ENCODE measurements at regions of chr11 and their contacts with region 1.

Region 1: GRCh38 chr11:73376160-73376802 is at the start of gene RELT:
- DNase-seq: peak; percentile 91
- H3K4me3 Mint-ChIP-seq: peak within 1 kb of the TSS; percentile 92
- H3K27ac Mint-ChIP-seq: peak within 1 kb of the TSS; percentile 91
- H3K4me1 Mint-ChIP-seq: peaks cover 45% of the 10 kb centered on the region
- H3K27me3 Mint-ChIP-seq: no peaks in the 10 kb centered on the region
- total RNA-seq, gene RELT: 17.9 to 18.5 TPM

Region 2: DNA sequence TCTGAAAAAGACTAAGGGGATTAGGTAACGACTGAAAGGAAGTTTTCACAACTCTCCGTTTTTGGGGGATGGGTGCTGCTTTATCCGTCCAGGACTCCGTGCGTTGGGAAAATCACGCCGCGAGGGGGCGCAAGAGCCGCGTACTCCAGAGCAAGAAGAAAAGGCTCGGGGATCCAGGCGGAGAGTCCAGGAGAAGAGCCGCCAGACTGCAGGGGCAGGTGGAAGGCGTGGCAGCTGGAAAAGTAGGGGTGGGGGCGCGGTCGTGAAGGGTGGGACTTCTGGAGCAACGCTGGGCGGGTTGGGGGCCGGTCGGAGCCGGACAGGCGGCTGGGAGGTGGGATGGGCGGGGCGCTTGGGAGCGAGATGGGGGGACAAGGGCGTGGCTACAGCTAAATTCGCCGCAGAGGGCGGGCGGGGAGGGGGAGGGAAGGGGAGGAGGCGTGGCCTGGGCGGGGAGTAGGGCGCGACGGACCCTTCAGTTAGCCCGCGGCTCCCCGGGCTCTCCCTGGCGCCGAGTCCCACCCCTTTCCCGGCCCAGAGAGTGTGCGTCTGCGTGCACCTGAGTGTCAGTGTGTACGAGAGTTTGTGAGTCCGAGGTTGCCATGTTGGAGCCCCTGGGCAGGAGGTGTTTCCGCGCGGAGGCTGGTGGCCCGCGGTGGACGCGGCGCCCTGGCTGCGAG is 68.8 kb before region 1 on chr11:
- CTCF ChIA-PET with region 1: no interaction called
- intact Hi-C with region 1: loop called (anchors 1 kb)
- DNase-seq: peak; percentile 95
- H3K4me3 Mint-ChIP-seq: peak overlapping the region; percentile 76
- H3K27ac Mint-ChIP-seq: no peak overlapping the region
- H3K4me1 Mint-ChIP-seq: peaks cover 6% of the 10 kb centered on the region
- H3K27me3 Mint-ChIP-seq: peaks cover 15% of the 10 kb centered on the region

Region 3: GRCh38 chr11:73360336-73361013 is 15.8 kb before region 1 on chr11:
- CTCF ChIA-PET with region 1: interaction called, 13 read pairs
- intact Hi-C with region 1: no loop called
- DNase-seq: peak; percentile 46
- H3K4me3 Mint-ChIP-seq: no peak overlapping the region
- H3K27ac Mint-ChIP-seq: no peak overlapping the region
- H3K4me1 Mint-ChIP-seq: no peaks in the 10 kb centered on the region
- H3K27me3 Mint-ChIP-seq: no peaks in the 10 kb centered on the region

Region 4: DNA sequence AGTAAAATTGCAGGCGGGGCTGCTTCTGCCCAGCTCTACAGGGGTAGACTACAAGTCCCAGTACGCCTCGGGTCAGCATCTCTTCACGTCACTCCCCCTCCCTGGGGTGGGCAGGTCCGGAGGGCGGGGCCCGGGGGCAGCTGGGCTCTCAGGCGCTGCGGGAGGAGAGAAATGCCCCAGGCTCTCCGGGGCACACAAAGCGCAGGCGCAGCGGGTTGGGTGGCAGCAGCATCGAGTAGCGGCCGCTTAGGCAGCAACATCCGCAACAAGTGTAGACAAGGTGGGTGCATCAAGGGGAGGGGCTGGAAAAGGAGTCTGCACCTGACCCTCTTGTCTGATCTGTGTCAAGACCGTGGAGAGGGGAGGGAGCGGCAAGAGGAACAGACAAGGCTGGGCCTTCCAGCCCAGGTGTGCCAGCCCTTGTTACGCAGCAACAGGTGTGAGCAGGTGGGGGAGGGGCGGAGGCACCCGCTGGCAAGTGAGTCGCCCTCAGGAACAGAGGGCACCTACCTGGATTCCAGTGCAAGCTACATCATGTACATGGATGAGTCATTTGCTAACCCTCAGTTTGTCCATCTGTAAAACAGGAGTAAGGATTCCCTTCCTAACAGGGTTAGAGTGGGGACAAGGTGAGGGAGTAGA is 271.3 kb after region 1 on chr11:
- CTCF ChIA-PET with region 1: interaction called, 4 read pairs
- intact Hi-C with region 1: loop called (anchors 1 kb)
- DNase-seq: peak; percentile 96
- H3K4me3 Mint-ChIP-seq: peak overlapping the region; percentile 80
- H3K27ac Mint-ChIP-seq: peak overlapping the region; percentile 63
- H3K4me1 Mint-ChIP-seq: peaks cover 18% of the 10 kb centered on the region
- H3K27me3 Mint-ChIP-seq: no peaks in the 10 kb centered on the region

Region 5: GRCh38 chr11:73760679-73761402 is 384.6 kb after region 1 on chr11 and contains the start of gene RAB6A:
- CTCF ChIA-PET with region 1: no interaction called
- intact Hi-C with region 1: loop called (anchors 10 kb)
- DNase-seq: peak; percentile 100
- H3K4me3 Mint-ChIP-seq: peak within 1 kb of the TSS; percentile 88
- H3K27ac Mint-ChIP-seq: peak within 1 kb of the TSS; percentile 90
- H3K4me1 Mint-ChIP-seq: peaks cover 34% of the 10 kb centered on the region
- H3K27me3 Mint-ChIP-seq: no peaks in the 10 kb centered on the region
- total RNA-seq, gene RAB6A: 36.7 to 41.2 TPM

Region 6: GRCh38 chr11:73876424-73877300 is 500.4 kb after region 1 on chr11 and contains the starts of genes COA4 and PAAF1:
- CTCF ChIA-PET with region 1: no interaction called
- intact Hi-C with region 1: loop called (anchors 5 kb)
- DNase-seq: peak; percentile 97
- H3K4me3 Mint-ChIP-seq: peak within 1 kb of the TSS; percentile 95
- H3K27ac Mint-ChIP-seq: peak within 1 kb of the TSS; percentile 92
- H3K4me1 Mint-ChIP-seq: peaks cover 42% of the 10 kb centered on the region
- H3K27me3 Mint-ChIP-seq: no peaks in the 10 kb centered on the region
- total RNA-seq, gene COA4: 87.8 to 94.2 TPM
- total RNA-seq, gene PAAF1: 29.7 to 30.4 TPM